ENCODE measurements at regions of chr9 and their contacts with region 1.

Region 1: DNA sequence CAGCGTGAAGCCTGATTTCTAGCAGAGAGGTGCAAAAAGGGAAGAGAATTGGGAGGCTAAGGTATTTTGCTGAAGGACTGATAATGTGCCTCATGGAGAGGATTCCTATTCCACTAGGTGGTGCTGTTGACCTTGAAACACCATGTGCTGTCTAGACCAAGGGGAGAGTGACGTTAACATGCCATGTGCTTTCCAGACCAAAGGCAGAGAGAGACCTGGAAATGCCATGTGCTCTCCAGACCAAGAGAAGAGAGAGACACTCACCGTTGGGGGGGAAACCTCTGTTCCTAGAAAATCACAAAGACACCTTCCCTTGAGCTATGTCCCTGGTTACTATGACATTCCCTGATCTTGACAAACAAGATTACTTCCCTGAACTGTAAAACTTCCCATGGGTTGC is 286.0 kb upstream of the TUSC1 start:
- DNase-seq: no peak
- ATAC-seq: no peak
- H3K4me3 ChIP-seq: no peak overlapping the region
- H3K27ac ChIP-seq: no peak overlapping the region
- H3K4me1 ChIP-seq: no peaks in the 10 kb centered on the region
- H3K27me3 ChIP-seq: no peaks in the 10 kb centered on the region
- CTCF ChIP-seq: peak; percentile 10

Region 2: DNA sequence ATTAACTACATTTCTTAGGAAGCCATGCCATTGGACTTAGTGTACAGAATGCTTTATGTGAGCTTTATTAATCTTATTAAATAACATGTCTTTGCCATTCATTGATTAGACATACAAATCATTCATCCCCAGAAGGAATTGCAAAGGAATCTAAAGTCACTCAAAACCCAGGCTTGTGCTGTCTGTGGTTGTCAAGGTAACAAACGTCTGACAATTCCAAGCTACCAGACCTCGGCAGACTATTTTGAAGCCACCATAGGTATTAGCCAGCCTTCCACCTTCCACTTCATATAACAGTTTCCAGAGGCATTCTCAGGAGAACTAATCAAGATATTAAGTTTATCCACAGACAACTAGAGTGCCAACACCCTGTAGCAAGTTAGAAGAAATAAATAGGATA is 150.8 kb before region 1 on chr9:
- intact Hi-C with region 1: no loop called
- DNase-seq: no peak
- ATAC-seq: no peak
- H3K4me3 ChIP-seq: no peak overlapping the region
- H3K27ac ChIP-seq: no peak overlapping the region
- H3K4me1 ChIP-seq: no peaks in the 10 kb centered on the region
- H3K27me3 ChIP-seq: no peaks in the 10 kb centered on the region
- CTCF ChIP-seq: no peak

Region 3: DNA sequence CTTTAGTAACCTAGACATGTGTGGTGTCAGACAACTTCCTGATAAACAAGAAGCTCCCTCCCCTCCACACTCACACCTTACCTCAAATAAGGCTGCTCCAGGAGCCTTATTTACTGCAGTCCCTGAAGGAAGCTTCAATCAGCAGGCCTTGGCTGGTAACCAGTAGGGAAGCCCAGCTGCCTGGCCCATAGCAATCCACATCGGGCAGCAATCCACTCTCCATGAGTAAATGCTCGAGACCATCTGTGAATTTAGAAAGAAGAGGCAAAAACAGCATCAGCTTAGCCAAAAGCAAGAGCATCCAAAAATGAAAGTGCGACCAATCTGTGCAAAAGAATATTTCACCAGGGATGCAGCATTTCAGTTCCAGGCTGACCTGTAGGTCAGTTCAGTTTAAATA is 72.7 kb before region 1 on chr9:
- intact Hi-C with region 1: no loop called
- DNase-seq: no peak
- ATAC-seq: no peak
- H3K4me3 ChIP-seq: no peak overlapping the region
- H3K27ac ChIP-seq: no peak overlapping the region
- H3K4me1 ChIP-seq: no peaks in the 10 kb centered on the region
- H3K27me3 ChIP-seq: no peaks in the 10 kb centered on the region
- CTCF ChIP-seq: no peak

Region 4: GRCh38 chr9:25936031-25936430 is 28.2 kb before region 1 on chr9:
- intact Hi-C with region 1: no loop called
- DNase-seq: no peak
- ATAC-seq: no peak
- H3K4me3 ChIP-seq: no peak overlapping the region
- H3K27ac ChIP-seq: no peak overlapping the region
- H3K4me1 ChIP-seq: no peaks in the 10 kb centered on the region
- H3K27me3 ChIP-seq: no peaks in the 10 kb centered on the region
- CTCF ChIP-seq: no peak

Region 5: GRCh38 chr9:26012797-26013594 is 48.8 kb after region 1 on chr9:
- intact Hi-C with region 1: loop called in 1 of 2 experiments (anchors 5 kb)
- DNase-seq: no peak
- ATAC-seq: no peak
- H3K4me3 ChIP-seq: no peak overlapping the region
- H3K27ac ChIP-seq: no peak overlapping the region
- H3K4me1 ChIP-seq: no peaks in the 10 kb centered on the region
- H3K27me3 ChIP-seq: no peaks in the 10 kb centered on the region
- CTCF ChIP-seq: no peak

Measured in psoas muscle (tissue), 8 donors.